ENCODE measurements at regions of chr12 and their contacts with region 1.

Region 1: DNA sequence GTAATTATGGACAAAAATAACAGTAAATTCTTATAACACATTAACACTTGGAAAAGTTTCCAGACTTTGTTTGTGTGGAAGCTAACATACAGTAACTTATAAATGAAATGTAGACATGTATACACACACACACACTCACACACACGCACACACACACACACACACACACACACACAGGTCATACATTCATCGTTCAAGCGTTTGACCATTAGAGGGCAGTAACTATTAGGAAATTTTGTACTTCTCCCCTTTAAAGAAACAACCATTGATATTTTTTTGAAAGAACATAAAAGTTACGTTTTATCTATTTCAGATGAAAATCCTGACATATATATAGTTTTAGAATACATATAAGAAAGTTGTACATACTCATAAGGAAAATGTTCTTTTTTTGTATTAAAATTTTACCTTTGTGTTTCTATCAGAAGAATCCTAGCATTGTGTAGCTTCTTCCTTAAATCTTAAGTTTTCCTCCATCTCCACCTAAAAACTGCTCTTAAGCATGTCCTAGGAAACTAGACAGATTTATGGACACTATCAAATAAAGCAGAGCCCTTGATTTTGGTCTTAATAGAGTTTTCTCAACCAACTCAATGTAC is 29.0 kb downstream of the PTPRQ start:
- DNase-seq: no peak
- ATAC-seq: no peak
- H3K4me3 ChIP-seq: no peak overlapping the region
- H3K27ac ChIP-seq: no peak overlapping the region
- H3K4me1 ChIP-seq: no peaks in the 10 kb centered on the region
- H3K27me3 ChIP-seq: no peaks in the 10 kb centered on the region

Region 2: DNA sequence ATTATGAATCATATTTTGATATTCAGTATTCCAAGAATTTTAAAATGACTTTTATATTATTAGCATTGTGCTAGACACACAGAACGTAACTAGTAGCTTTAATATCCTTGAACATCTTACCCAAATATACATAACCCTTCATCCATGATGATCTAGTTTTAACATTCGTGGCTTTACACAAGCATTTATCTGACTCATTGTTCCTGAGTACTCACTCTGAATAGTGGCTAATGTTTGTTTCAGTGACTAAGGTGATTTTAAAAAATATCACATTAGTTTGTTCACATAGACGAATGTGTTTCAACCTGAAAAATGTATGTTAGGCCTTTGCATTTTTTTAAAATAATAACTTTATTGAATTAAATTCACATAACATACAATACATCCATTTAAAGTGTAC is 108.9 kb before region 1 on chr12:
- intact Hi-C with region 1: no loop called
- DNase-seq: no peak
- ATAC-seq: no peak
- H3K4me3 ChIP-seq: no peak overlapping the region
- H3K27ac ChIP-seq: no peak overlapping the region
- H3K4me1 ChIP-seq: no peaks in the 10 kb centered on the region
- H3K27me3 ChIP-seq: no peaks in the 10 kb centered on the region

Region 3: GRCh38 chr12:80598004-80598606 is 125.1 kb after region 1 on chr12:
- intact Hi-C with region 1: loop called (anchors 10 kb)
- DNase-seq: no peak
- ATAC-seq: no peak
- H3K4me3 ChIP-seq: no peak overlapping the region
- H3K27ac ChIP-seq: no peak overlapping the region
- H3K4me1 ChIP-seq: no peaks in the 10 kb centered on the region
- H3K27me3 ChIP-seq: no peaks in the 10 kb centered on the region

Region 4: DNA sequence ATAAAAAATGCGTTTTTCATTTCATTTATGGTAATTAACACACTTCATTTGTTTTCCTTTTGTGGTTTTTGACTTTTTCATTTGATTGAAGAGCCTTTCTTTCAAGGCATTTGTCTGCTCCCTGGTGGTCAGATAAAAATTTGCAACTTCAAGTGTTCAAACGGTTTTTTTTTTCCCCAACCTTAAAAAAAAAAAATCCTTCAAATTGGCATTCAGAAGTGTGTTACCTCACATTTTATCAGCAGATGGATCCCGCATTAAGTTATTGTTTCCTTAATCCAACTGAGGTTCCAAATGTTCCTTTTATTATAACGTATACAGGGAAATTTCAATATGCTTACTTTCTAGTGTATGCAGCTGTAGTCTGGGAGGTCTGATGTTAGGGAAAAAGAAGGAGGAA is 290.9 kb after region 1 on chr12:
- intact Hi-C with region 1: loop called (anchors 5 kb)
- DNase-seq: no peak
- ATAC-seq: no peak
- H3K4me3 ChIP-seq: no peak overlapping the region
- H3K27ac ChIP-seq: no peak overlapping the region
- H3K4me1 ChIP-seq: no peaks in the 10 kb centered on the region
- H3K27me3 ChIP-seq: no peaks in the 10 kb centered on the region

Measured in aorta (tissue), 5 donors.